Astrocyte of the cerebellum (primary cell): ENCODE measurements at regions of chr7 and their contacts with region 1.

Region 1: GRCh38 chr7:6142871-6143380 is 111.8 kb downstream of the ANKRD61 start:
- DNase-seq: no peak
- H3K4me3 ChIP-seq: no peak overlapping the region
- CTCF ChIP-seq: no peak

Region 2: DNA sequence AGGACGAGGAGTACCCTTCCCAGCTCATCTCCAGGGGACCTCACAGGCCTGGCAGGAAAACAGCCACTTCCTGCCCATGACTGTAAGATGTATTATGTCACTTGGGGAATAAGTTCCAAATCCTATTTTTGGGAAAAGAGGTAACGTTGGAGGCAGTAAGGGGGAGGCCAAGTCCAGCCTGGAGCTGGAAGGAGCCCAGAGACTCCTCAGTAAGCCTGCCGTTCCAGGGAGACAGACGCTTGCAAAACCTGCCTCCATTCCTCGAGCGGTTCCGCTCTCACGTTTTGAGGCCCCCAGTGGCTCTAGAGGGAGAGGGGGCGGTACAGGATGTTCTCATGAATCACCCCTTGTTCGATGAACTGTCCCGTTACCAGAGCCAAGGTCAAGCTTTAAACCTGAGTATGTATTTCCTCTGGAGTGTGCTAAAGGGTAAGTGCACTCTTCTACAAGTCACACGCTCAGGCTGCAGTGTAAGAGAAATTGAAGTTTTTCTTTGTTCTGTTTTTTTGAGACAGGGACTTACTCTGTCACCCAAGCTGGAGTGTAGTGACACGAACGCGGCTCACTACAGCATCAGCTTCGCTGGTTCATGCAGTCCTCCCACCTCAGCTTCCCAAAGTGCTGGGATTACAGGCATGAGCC is 175.0 kb after region 1 on chr7:
- in situ Hi-C with region 1: loop called (anchors 5 kb)
- DNase-seq: no peak
- H3K4me3 ChIP-seq: no peak overlapping the region
- CTCF ChIP-seq: no peak